KBM-7 (cell line): ENCODE measurements at regions of chr11 and their contacts with region 1.

Region 1: GRCh38 chr11:48228761-48229160 is 12.2 kb downstream of the OR4B1 start:
- DNase-seq: no peak

Region 2: GRCh38 chr11:48141475-48142122 is 87.2 kb before region 1 on chr11:
- in situ Hi-C with region 1: loop called (anchors 25 kb)
- DNase-seq: no peak